ENCODE measurements at regions of chr11 and their contacts with region 1.

Region 1: GRCh38 chr11:85086547-85087276 is 540.4 kb downstream of the DLG2 start:
- DNase-seq: peak; percentile 52
- ATAC-seq: peak; percentile 65
- H3K4me3 ChIP-seq: no peak overlapping the region
- H3K27ac ChIP-seq: no peak overlapping the region
- H3K4me1 ChIP-seq: peaks cover 2% of the 10 kb centered on the region; the same call in 1 of the 2 replicates
- H3K27me3 ChIP-seq: no peaks in the 10 kb centered on the region
- CTCF ChIP-seq: no peak
- POLR2A ChIP-seq: no peak
- RAD21 ChIP-seq: no peak

Region 2: GRCh38 chr11:84333221-84333620 is 753.5 kb before region 1 on chr11:
- CTCF ChIA-PET with region 1: no interaction called
- POLR2A ChIA-PET with region 1: no interaction called
- dilution Hi-C with region 1: no loop called
- in situ Hi-C with region 1: no loop called
- intact Hi-C with region 1: loop called (anchors 5 kb)
- DNase-seq: no peak
- ATAC-seq: no peak
- H3K4me3 ChIP-seq: no peak overlapping the region
- H3K27ac ChIP-seq: no peak overlapping the region
- H3K4me1 ChIP-seq: no peaks in the 10 kb centered on the region
- H3K27me3 ChIP-seq: no peaks in the 10 kb centered on the region
- CTCF ChIP-seq: no peak
- POLR2A ChIP-seq: no peak
- RAD21 ChIP-seq: no peak

Region 3: DNA sequence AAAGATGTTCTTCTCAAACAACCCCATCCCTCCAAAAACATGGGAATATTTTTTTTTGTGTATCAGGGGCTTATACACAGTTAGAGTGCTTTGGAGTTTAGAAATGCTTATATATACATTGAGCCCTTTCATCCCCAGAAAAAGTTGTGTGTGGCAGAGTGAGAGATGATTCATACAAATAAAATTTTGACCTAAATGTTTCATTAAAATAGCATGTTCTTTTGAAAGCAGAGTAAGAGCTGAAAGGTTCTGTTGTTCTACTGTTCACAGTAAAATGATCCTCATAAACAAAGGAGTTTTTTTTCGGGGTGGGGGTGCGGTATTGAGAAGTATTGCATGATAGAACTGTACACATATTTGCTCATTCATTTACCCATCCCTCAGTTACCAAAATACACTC is 28.1 kb after region 1 on chr11:
- CTCF ChIA-PET with region 1: no interaction called
- POLR2A ChIA-PET with region 1: no interaction called
- dilution Hi-C with region 1: no loop called
- in situ Hi-C with region 1: no loop called
- intact Hi-C with region 1: loop called (anchors 1 kb)
- DNase-seq: peak; percentile 54
- ATAC-seq: peak; percentile 65
- H3K4me3 ChIP-seq: no peak overlapping the region
- H3K27ac ChIP-seq: no peak overlapping the region
- H3K4me1 ChIP-seq: peaks cover 2% of the 10 kb centered on the region; the same call in 1 of the 2 replicates
- H3K27me3 ChIP-seq: no peaks in the 10 kb centered on the region
- CTCF ChIP-seq: no peak
- POLR2A ChIP-seq: no peak
- RAD21 ChIP-seq: no peak

Measured in IMR-90 (cell line).